Naive thymus-derived CD8-positive, alpha-beta T cell (primary cell): ENCODE measurements at regions of chr13 and their contacts with region 1.

Region 1: DNA sequence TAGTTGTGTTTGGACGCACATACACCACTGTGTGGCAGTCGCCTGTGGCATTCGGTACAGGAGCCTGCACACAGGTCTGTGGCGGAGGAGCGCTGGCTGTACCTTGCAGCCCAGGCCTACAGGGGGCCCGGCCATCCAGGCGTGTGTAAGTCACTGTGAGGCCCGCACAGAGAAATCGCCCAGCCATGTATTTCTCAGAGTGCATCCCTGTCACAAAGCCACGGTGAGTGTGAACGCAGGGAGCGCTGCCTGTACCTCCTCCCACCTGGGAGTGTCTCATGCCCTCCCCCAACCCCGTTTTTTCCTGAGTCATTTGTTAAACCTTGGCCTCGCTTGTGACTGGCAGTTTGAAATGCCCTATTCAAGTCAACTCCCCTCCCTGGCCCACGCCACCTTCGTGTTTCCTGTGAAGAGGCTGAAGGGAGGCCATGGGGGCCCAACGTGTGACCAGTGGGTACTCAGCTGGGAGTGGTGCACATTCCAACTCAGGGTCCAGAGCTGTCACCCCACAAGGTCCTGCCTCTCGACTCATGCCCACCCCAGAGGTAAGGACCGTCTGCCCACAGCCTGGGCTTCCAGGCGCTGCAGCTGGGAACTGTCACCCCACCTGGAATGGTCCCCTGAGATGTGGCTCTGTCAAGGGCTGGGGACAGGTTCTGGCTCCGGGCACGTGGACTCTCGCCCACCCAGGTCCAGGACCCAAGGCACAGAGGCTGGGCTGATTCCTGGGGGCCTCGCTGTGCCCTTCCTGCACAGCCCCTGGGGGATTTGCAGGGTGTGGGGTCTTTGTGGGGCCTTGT is 11.6 kb upstream of the RASA3 start:
- DNase-seq: peak in 9 of 10 donors; percentile 47 to 83 (median 69)
- ATAC-seq: peak; percentile 24 to 39
- H3K4me3 Mint-ChIP-seq: peak overlapping the region in 5 of 10 donors; percentile 14 to 77 (median 64)
- H3K27ac Mint-ChIP-seq: peak overlapping the region in 1 of 10 donors; percentile 99
- H3K4me1 Mint-ChIP-seq: peaks cover 12 to 42% (median 41%) of the 10 kb centered on the region in 4 donors
- H3K27me3 Mint-ChIP-seq: no peaks in the 10 kb centered on the region

Region 2: GRCh38 chr13:114110091-114110829 is 33.7 kb before region 1 on chr13:
- POLR2A ChIA-PET with region 1: interaction called, 50 read pairs
- DNase-seq: peak; percentile 64 to 92 (median 83)
- ATAC-seq: peak; percentile 82 to 87
- H3K4me3 Mint-ChIP-seq: peak overlapping the region; percentile 78 to 92 (median 86)
- H3K27ac Mint-ChIP-seq: peak overlapping the region; percentile 95 to 99 (median 98)
- H3K4me1 Mint-ChIP-seq: peaks cover 43 to 86% (median 82%) of the 10 kb centered on the region in 4 donors
- H3K27me3 Mint-ChIP-seq: peaks cover 0 to 1% (median 0%) of the 10 kb centered on the region in 5 donors

Region 3: GRCh38 chr13:114124921-114125320 is 19.1 kb before region 1 on chr13:
- POLR2A ChIA-PET with region 1: interaction called, 191 read pairs
- DNase-seq: peak in 9 of 10 donors; percentile 60 to 91 (median 77)
- ATAC-seq: peak; percentile 58 to 80
- H3K4me3 Mint-ChIP-seq: peak overlapping the region; percentile 60 to 89 (median 84)
- H3K27ac Mint-ChIP-seq: peak overlapping the region; percentile 94 to 99 (median 97)
- H3K4me1 Mint-ChIP-seq: peaks cover 58 to 90% (median 89%) of the 10 kb centered on the region in 4 donors
- H3K27me3 Mint-ChIP-seq: no peaks in the 10 kb centered on the region

Region 4: DNA sequence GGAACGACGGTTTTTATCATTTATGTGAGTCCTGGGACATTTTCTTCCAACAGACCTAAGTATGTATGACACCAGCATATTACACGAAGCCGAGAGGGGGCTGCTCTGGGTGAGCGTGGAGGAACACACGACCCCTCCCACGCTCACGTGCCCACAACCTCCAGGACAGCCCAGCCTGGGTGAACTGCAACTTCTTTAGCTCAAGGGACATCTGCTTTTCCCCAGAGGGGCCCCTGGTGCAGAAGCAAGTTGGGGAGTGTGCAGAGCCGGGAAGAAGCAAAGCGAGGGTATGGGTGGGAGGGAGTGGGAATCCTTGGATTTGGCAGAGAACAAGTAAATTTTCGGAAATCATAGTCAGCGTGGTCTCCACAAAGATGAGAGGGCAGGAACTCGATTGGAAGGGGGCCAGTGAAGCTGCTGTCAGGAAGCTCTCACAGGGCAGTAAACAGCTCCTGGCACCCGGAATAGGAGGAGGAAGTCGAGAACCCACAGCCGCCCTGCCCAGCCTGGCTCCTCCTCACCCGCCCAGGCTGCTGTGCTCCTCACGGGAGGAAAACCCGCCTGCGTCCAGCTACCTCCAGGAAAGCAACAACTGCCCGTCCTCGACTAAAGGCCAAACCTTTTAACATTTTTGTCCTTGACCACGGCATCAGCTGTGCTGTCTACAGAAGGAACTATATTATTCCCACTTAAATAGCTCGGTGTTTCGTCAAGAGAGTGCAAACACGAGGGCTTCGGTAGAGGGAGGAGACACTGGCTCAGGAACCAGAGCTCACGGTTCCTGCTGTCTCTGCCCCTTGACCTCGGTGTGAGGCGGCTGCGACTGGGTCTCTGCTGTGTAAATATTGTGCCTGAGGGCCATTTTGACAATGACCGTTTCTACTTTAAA is 17.9 kb after region 1 on chr13:
- POLR2A ChIA-PET with region 1: interaction called, 114 read pairs
- DNase-seq: peak in 4 of 10 donors; percentile 24 to 52 (median 40)
- ATAC-seq: peak; percentile 77 to 78
- H3K4me3 Mint-ChIP-seq: peak overlapping the region; percentile 54 to 87 (median 76)
- H3K27ac Mint-ChIP-seq: peak overlapping the region; percentile 60 to 99 (median 94)
- H3K4me1 Mint-ChIP-seq: peaks cover 38 to 93% (median 85%) of the 10 kb centered on the region in 4 donors
- H3K27me3 Mint-ChIP-seq: no peaks in the 10 kb centered on the region

Region 5: GRCh38 chr13:114226699-114227323 is 82.8 kb after region 1 on chr13:
- POLR2A ChIA-PET with region 1: interaction called, 20 read pairs
- DNase-seq: peak; percentile 69 to 89 (median 80)
- ATAC-seq: peak; percentile 81 to 87
- H3K4me3 Mint-ChIP-seq: peak overlapping the region; percentile 7 to 76 (median 58)
- H3K27ac Mint-ChIP-seq: peak overlapping the region; percentile 78 to 95 (median 88)
- H3K4me1 Mint-ChIP-seq: peaks cover 20 to 49% (median 49%) of the 10 kb centered on the region in 4 donors
- H3K27me3 Mint-ChIP-seq: peaks cover 0 to 7% (median 4%) of the 10 kb centered on the region in 5 donors